Dendritic cell treated with granulocyte-macrophage colony-stimulating factor and Interleukin-4, amounts not matched to agents 40 ng/mL and 50 ng/mL, for 4 days (primary cell): ENCODE measurements at regions of chr22 and their contacts with region 1.

Region 1: GRCh38 chr22:26330966-26331625 is 98.0 kb upstream of the ASPHD2 start:
- H3K4me3 Mint-ChIP-seq: no peak overlapping the region
- H3K27ac Mint-ChIP-seq: no peak overlapping the region
- H3K4me1 Mint-ChIP-seq: no peaks in the 10 kb centered on the region
- H3K27me3 Mint-ChIP-seq: peaks cover 11% of the 10 kb centered on the region

Region 2: DNA sequence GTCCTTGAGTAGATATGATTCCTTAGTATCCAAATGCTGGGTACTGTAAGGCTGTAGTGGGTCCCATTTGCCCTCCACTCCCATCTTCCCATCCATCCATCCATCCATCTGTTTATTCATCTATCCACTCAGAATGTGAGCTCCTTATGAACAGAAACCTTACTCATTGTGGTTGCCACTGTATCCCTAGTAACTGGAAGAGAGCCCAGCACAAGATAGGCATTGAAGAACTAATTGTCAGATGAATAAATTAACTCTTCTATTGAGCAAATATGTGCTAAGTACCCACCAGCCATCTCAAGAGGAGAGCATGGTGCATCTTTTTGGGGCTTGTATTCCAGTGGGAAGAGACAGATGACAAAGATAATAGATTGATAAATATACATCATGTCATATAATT is 248.2 kb before region 1 on chr22:
- intact Hi-C with region 1: loop called (anchors 5 kb)
- H3K4me3 Mint-ChIP-seq: no peak overlapping the region
- H3K27ac Mint-ChIP-seq: no peak overlapping the region
- H3K4me1 Mint-ChIP-seq: no peaks in the 10 kb centered on the region
- H3K27me3 Mint-ChIP-seq: peaks cover 2% of the 10 kb centered on the region